Spleen (tissue), 13 donors: ENCODE measurements at regions of chr21 and their contacts with region 1.

Region 1: DNA sequence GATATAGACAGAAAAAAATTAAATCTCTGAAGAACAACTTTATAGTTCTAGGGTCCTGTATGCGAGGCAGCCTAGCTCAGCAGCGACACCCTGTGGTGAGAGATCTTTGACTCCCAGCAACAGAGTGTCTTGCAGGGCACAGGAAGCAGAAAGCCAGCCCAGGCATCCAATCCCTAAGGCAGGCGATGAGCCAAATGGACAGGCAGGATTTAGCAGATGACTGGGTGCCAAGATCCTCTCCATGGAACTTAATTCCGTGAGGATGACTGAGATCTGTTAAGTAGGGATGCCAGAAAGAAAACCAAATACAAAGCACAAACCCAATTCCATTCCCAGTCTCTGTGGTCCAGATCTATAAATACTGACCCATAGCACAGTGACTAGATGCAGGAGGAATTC is 38.8 kb downstream of the HLCS start:
- DNase-seq: peak; percentile 83
- H3K4me3 ChIP-seq: no peak overlapping the region
- H3K27ac ChIP-seq: no peak overlapping the region
- H3K4me1 ChIP-seq: peaks cover 0 to 11% (median 6%) of the 10 kb centered on the region in 6 donors
- H3K27me3 ChIP-seq: no peaks in the 10 kb centered on the region
- CTCF ChIP-seq: peak; percentile 29 to 89 (median 79)
- POLR2A ChIP-seq: no peak

Region 2: GRCh38 chr21:36504067-36505058 is 423.4 kb before region 1 on chr21:
- intact Hi-C with region 1: loop called (anchors 5 kb)
- DNase-seq: no peak
- H3K4me3 ChIP-seq: no peak overlapping the region
- H3K27ac ChIP-seq: no peak overlapping the region
- H3K4me1 ChIP-seq: peaks cover 0 to 5% (median 0%) of the 10 kb centered on the region in 6 donors
- H3K27me3 ChIP-seq: peaks cover 0 to 14% (median 0%) of the 10 kb centered on the region in 7 donors
- CTCF ChIP-seq: peak; percentile 56 to 91 (median 84)
- POLR2A ChIP-seq: no peak

Region 3: DNA sequence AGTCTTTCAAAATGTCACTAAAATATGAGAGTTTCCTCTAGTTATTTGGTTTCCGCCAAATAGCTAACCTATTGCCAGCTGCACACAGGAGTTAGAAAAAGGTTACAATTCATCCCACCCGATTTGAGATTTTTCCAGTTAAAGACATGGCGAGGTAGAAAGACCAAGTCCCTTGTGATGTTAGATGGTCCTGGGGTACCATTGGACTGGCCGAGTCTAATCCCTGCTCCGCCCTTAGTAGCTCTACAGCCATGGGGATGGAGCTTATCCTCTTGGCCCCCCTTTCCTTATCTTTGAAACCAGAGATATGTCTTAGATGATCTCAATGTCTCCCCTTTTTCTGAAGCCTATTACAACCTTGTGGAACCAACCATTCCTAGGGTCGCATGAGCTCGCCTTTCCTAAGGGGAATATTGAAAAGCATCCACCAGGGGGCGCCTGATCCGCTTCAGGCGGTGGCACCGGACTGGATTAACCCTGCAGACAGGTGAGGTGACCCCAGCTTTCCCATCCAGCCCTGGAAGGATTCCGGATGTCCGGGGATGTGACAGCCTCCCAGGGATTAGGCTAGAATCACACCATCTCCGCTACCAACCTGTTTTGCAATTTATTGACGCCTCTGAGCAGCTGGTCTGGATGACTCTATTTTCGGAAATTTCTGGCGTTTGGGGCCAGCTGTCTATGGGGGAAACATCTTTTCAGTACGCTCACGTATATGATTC is 297.1 kb before region 1 on chr21:
- intact Hi-C with region 1: loop called (anchors 10 kb)
- DNase-seq: no peak
- H3K4me3 ChIP-seq: no peak overlapping the region
- H3K27ac ChIP-seq: no peak overlapping the region
- H3K4me1 ChIP-seq: no peaks in the 10 kb centered on the region
- H3K27me3 ChIP-seq: peaks cover 0 to 42% (median 0%) of the 10 kb centered on the region in 7 donors
- CTCF ChIP-seq: peak in 10 of 11 experiments; percentile 13 to 75 (median 64)
- POLR2A ChIP-seq: no peak

Region 4: GRCh38 chr21:37675202-37675801 is 747.6 kb after region 1 on chr21:
- intact Hi-C with region 1: no loop called
- DNase-seq: peak; percentile 87
- H3K4me3 ChIP-seq: peak overlapping the region in 1 of 8 donors; percentile 27
- H3K27ac ChIP-seq: no peak overlapping the region
- H3K4me1 ChIP-seq: peaks cover 4 to 7% (median 5%) of the 10 kb centered on the region in 6 donors
- H3K27me3 ChIP-seq: peaks cover 0 to 40% (median 11%) of the 10 kb centered on the region in 7 donors
- CTCF ChIP-seq: peak; percentile 27 to 91 (median 81)
- POLR2A ChIP-seq: no peak